ENCODE measurements at regions of chr10 and their contacts with region 1.

Region 1: GRCh38 chr10:114967071-114967470 is 29.1 kb downstream of the TRUB1 start:
- DNase-seq: no peak
- H3K4me3 ChIP-seq: no peak overlapping the region
- H3K27ac ChIP-seq: no peak overlapping the region
- H3K4me1 ChIP-seq: no peaks in the 10 kb centered on the region
- H3K27me3 ChIP-seq: no peaks in the 10 kb centered on the region
- CTCF ChIP-seq: no peak
- POLR2A ChIP-seq: no peak

Region 2: DNA sequence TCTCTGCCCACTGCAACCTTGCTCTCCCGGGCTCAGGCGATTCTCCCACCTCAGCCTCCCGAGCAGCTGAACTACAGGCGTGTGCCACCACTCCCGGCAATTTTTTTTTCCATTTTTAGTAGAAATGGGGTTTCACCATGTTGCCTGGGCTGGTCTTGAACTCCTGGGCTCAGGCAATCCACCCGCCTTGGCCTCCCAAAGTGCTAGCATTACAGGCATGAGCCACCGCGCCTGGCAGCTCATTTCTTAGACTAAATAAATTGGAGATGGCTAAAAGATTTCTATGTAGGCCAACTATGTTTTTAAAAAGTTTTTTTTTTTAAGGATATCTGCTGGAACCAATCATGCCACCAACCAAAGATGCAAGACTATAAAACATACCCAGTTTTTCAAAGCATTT is 38.7 kb after region 1 on chr10:
- intact Hi-C with region 1: loop called (anchors 5 kb)
- DNase-seq: no peak
- H3K4me3 ChIP-seq: no peak overlapping the region
- H3K27ac ChIP-seq: no peak overlapping the region
- H3K4me1 ChIP-seq: no peaks in the 10 kb centered on the region
- H3K27me3 ChIP-seq: no peaks in the 10 kb centered on the region
- CTCF ChIP-seq: no peak
- POLR2A ChIP-seq: no peak

Region 3: DNA sequence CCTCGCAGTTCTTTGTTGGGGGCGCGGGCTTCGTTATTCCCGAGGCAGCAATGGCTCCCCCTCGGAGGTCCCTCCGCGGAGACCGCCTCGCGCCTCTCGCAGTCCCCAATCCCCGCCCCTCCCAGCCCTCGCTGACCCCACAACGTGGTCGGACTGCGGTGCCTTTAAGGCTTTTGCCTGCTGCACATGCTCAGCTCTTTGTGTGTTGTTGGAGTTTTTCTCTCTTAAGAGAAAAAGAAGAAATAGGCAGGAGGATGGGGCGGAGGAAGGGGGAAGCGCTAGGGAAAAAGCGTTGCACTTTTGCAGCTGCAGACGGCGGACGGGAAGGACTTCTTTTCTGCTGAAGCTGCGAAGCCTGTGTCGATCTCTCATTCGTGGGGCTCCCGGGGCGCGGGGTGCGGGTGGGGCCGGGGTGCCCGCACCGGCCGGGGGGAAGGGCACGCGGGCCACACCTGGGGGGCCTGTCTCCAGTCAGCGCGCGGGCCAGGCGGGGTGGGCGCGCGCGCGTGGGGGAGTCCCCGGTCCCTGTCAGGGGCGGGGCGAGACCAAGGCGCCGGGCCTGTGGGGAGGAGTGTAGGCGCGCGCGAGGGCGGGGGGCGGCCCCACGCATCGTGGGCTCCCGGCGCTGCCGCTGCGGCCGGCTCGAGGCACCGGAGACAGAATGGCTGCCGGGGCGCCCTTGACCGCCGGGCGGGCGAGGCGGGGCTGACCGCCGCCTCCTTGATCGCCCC is 125.6 kb after region 1 on chr10:
- intact Hi-C with region 1: no loop called
- DNase-seq: peak; percentile 69
- H3K4me3 ChIP-seq: peak overlapping the region; percentile 66 to 74
- H3K27ac ChIP-seq: peak overlapping the region in 1 of 2 donors; percentile 80
- H3K4me1 ChIP-seq: no peaks in the 10 kb centered on the region
- H3K27me3 ChIP-seq: no peaks in the 10 kb centered on the region
- CTCF ChIP-seq: no peak
- POLR2A ChIP-seq: no peak